Activated T-helper 1 cell treated with anti-CD3 and anti-CD28 coated beads, Interleukin-12 subunit alpha, Interleukin-12 subunit beta, Interleukin-2, Interleukin-4 antibody, amounts not matched to agents 30 ng/mL and 10 ng/mL and 1 ng/mL, durations not matched to agents 14 hours and 24 hours and 36 hours (primary cell): ENCODE measurements at regions of chr1 and their contacts with region 1.

Region 1: DNA sequence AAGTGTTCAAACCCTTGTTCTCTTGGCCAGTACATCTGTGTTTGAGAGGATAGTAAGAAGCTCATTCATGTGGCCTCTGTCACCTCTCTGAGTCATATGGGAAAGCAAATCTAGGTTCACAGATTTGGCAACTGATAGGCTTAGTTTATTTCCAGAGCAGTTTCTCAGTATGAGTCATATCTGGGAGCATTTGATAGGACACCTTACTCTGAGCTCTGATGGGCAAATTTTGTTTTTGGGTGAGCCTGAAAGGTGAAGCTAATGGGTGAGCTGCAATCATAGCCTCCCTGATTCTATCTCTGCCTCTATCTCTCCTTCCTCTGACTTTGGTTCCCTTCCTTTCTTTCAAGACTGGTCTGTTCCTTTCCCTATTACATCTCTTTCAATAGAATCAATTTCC is 134.4 kb downstream of the S1PR1 start:
- DNase-seq: peak; percentile 33
- H3K4me3 Mint-ChIP-seq: peak overlapping the region; percentile 40
- H3K27ac Mint-ChIP-seq: no peak overlapping the region
- H3K4me1 Mint-ChIP-seq: peaks cover 12% of the 10 kb centered on the region
- H3K27me3 Mint-ChIP-seq: peaks cover 14% of the 10 kb centered on the region

Region 2: GRCh38 chr1:101198842-101199636 is 172.2 kb before region 1 on chr1:
- intact Hi-C with region 1: loop called (anchors 1 kb)
- DNase-seq: no peak
- H3K4me3 Mint-ChIP-seq: peak overlapping the region; percentile 9
- H3K27ac Mint-ChIP-seq: peak overlapping the region; percentile 85
- H3K4me1 Mint-ChIP-seq: peaks cover 35% of the 10 kb centered on the region
- H3K27me3 Mint-ChIP-seq: no peaks in the 10 kb centered on the region

Region 3: DNA sequence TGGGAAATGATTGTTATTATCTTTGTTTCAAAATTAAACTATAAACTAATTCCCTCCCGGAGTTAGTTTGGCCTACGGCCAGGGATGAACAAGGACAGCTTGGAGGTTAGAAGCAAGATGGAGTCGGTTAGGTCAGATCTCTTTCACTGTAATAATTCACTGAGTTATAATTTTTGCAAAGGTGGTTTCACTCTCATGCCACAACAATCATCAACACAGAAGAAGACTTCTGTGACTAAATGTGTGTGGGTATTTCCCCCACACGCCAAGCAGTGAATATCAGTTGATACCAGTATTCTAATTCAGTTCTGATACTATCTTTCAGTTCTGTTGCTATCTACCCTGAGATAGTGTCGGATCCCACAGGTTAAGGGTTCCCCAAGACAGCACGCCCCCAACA is 80.6 kb after region 1 on chr1:
- intact Hi-C with region 1: loop called (anchors 1 kb)
- DNase-seq: no peak
- H3K4me3 Mint-ChIP-seq: no peak overlapping the region
- H3K27ac Mint-ChIP-seq: no peak overlapping the region
- H3K4me1 Mint-ChIP-seq: peaks cover 34% of the 10 kb centered on the region
- H3K27me3 Mint-ChIP-seq: peaks cover 7% of the 10 kb centered on the region